Calu3 (cell line): ENCODE measurements at regions of chrX and their contacts with region 1.

Region 1: GRCh38 chrX:39158801-39159657 is 357.8 kb downstream of the MID1IP1 start:
- DNase-seq: no peak
- H3K4me3 Mint-ChIP-seq: no peak overlapping the region
- H3K27ac Mint-ChIP-seq: no peak overlapping the region
- H3K4me1 Mint-ChIP-seq: peaks cover 33% of the 10 kb centered on the region
- H3K27me3 Mint-ChIP-seq: peaks cover 40% of the 10 kb centered on the region
- CTCF ChIP-seq: no peak

Region 2: DNA sequence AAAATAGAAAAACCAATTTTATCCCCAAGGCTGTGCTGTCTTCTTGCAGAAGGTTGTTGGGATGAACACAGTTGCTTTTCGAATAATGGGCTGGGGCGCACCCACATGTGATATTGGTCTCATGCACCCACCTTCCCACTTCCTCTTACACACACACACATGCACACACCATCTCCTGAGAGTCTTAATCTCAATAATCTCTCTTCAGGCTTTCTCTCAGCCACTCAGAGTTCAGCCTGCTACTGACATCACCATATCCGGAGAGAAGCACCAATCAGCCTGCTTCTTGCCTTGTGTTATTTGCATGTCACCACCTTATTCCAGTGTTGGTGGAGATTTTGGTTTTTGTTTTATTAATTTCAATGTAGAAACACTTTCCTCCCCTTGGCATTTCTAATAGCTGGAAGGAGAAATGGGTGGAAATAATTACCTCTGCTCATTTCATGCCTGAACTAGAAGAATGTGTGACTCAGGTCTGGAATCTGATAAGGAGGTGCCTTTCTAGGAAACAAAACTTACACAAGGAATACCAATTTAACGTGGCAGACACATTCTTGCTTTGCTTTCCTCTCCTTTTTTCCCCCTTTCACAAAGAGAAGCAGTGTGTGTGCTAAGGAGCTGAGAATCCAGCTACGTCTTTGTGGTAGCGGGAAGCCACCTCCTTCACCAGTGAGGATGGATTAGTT is 42.4 kb after region 1 on chrX:
- CTCF ChIA-PET with region 1: no interaction called
- intact Hi-C with region 1: loop called (anchors 5 kb)
- DNase-seq: no peak
- H3K4me3 Mint-ChIP-seq: no peak overlapping the region
- H3K27ac Mint-ChIP-seq: no peak overlapping the region
- H3K4me1 Mint-ChIP-seq: peaks cover 30% of the 10 kb centered on the region
- H3K27me3 Mint-ChIP-seq: no peaks in the 10 kb centered on the region
- CTCF ChIP-seq: no peak

Region 3: GRCh38 chrX:39453889-39454621 is 295.0 kb after region 1 on chrX:
- CTCF ChIA-PET with region 1: no interaction called
- intact Hi-C with region 1: no loop called
- DNase-seq: no peak
- H3K4me3 Mint-ChIP-seq: no peak overlapping the region
- H3K27ac Mint-ChIP-seq: no peak overlapping the region
- H3K4me1 Mint-ChIP-seq: no peaks in the 10 kb centered on the region
- H3K27me3 Mint-ChIP-seq: peaks cover 58% of the 10 kb centered on the region
- CTCF ChIP-seq: no peak